Ascending aorta (tissue), 2 donors: ENCODE measurements at regions of chr5 and their contacts with region 1.

Region 1: DNA sequence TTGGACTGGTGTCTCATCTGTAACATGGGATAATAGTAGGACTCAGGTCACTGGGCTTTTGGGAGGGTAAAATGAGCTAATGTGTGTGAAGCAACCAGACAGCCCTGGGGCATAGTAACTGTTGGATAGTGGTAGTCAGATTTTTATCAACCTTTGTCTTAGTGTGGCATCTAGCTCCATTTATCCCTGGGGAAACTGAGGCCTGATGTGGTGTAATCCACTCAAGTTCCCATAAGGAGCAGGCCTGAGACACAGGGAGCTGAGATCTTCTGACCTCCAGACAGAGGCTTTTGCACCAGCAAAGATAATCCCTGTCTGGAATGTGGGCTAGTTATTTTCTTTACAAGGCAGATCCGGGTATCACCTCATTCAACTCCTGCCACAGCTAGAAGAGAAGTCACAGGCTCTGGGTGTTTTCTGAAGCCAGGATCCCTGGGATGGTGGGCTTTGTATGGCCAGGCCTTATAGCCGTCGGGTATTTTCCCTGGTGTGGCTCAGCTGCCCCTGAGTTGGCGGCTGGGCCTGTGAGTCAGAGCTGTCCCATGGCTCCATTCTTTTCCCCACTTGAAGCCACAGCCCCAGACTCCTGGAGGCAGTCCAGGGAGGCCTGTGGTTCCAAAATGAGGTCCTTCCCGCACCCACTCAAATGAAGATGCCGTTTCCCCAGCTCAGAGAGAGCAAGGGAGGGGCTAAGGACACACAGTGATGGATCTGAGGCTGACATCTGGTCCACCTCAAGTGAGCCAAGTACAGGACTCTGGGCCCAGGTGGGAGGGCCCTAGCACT is 26.1 kb upstream of the CSF1R start:
- DNase-seq: peak; percentile 56 to 89
- H3K4me3 ChIP-seq: no peak overlapping the region
- H3K27ac ChIP-seq: peak overlapping the region; percentile 72 to 75
- H3K4me1 ChIP-seq: peaks cover 9 to 11% of the 10 kb centered on the region in 2 donors
- H3K27me3 ChIP-seq: no peaks in the 10 kb centered on the region
- CTCF ChIP-seq: no peak

Region 2: GRCh38 chr5:149834246-149834855 is 278.1 kb before region 1 on chr5:
- intact Hi-C with region 1: loop called (anchors 10 kb)
- DNase-seq: peak in 1 of 2 donors; percentile 79
- H3K4me3 ChIP-seq: no peak overlapping the region
- H3K27ac ChIP-seq: no peak overlapping the region
- H3K4me1 ChIP-seq: no peaks in the 10 kb centered on the region
- H3K27me3 ChIP-seq: no peaks in the 10 kb centered on the region
- CTCF ChIP-seq: peak; percentile 61 to 74 (median 73)

Region 3: GRCh38 chr5:150000256-150000989 is 112.0 kb before region 1 on chr5 and contains the starts of genes HMGXB3 and TIGD6:
- intact Hi-C with region 1: loop called (anchors 5 kb)
- DNase-seq: peak; percentile 73 to 95
- H3K4me3 ChIP-seq: peak within 1 kb of the TSS; percentile 79 to 98
- H3K27ac ChIP-seq: peak within 1 kb of the TSS; percentile 93 to 95
- H3K4me1 ChIP-seq: peaks cover 8 to 24% of the 10 kb centered on the region in 2 donors
- H3K27me3 ChIP-seq: no peaks in the 10 kb centered on the region
- CTCF ChIP-seq: no peak
- total RNA-seq, gene HMGXB3: 56.4 TPM
- total RNA-seq, gene TIGD6: 4.2 TPM